ENCODE measurements at regions of chr11 and their contacts with region 1.

Region 1: DNA sequence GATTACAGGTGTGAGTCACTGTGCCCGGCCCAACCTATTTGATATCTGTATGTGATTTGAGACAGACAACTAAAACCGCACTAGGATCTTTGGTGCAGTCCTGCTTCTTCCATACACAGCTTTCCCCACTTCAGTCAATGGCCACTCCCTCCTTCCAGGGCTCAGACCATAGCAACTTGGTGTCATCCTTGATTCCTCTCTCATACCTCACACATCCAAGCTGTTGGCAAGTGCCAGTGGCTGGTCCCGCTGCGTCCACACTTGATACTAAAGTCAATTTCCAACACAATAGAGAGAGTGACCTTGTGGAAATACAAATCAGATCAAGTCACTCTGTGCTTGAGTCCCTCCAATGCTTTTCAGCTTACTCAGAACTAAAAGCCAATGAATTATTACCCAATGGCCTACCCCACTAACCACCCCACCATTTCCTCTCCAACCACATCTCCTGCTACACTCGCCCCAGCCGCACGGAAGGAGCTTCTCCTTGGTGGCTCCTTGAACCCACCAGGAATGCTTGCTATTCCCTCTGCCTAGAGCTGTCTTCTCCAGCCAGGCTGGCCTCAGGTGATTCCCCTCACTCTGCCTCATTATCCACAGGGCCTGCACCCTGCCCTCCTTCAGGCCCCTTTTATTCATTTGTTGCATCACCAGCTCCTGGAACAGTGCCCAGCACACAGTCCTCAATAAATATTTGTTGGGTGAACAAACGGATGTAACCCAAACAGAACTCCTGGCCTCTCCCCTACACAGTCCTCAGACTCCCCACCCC is 12.9 kb downstream of the ABTB2 start:
- DNase-seq: peak in 1 of 2 donors; percentile 26
- ATAC-seq: peak in 5 of 8 donors; percentile 3 to 25 (median 21)
- H3K4me3 ChIP-seq: no peak overlapping the region
- H3K27ac ChIP-seq: peak overlapping the region in 8 of 10 donors; percentile 49 to 90 (median 79)
- H3K4me1 ChIP-seq: peaks cover 39 to 89% (median 69%) of the 10 kb centered on the region in 9 donors
- H3K27me3 ChIP-seq: no peaks in the 10 kb centered on the region
- CTCF ChIP-seq: no peak

Region 2: DNA sequence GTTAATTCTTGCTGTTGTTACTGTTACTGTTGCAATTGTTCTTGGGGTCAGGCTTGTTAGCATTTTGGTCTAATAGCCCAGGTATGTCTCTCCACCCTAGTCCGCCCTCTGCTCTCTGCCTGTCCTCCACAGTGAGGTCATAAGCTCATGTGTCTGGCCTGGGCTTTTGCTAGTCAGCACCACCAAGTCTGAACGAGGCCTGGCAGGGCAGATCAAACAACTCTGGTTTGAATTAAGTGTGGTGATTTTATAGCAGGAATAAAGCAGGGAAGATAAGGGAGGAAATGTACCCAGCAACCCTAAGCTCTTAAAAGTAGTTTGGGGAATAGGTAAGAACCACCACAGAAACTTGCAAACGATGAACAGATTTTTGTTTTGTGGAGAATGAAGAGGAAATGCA is 85.9 kb before region 1 on chr11:
- intact Hi-C with region 1: loop called in 3 of 10 experiments (anchors 5 to 10 kb)
- DNase-seq: no peak
- ATAC-seq: no peak
- H3K4me3 ChIP-seq: no peak overlapping the region
- H3K27ac ChIP-seq: no peak overlapping the region
- H3K4me1 ChIP-seq: peaks cover 9 to 48% (median 25%) of the 10 kb centered on the region in 9 donors
- H3K27me3 ChIP-seq: no peaks in the 10 kb centered on the region
- CTCF ChIP-seq: no peak

Region 3: DNA sequence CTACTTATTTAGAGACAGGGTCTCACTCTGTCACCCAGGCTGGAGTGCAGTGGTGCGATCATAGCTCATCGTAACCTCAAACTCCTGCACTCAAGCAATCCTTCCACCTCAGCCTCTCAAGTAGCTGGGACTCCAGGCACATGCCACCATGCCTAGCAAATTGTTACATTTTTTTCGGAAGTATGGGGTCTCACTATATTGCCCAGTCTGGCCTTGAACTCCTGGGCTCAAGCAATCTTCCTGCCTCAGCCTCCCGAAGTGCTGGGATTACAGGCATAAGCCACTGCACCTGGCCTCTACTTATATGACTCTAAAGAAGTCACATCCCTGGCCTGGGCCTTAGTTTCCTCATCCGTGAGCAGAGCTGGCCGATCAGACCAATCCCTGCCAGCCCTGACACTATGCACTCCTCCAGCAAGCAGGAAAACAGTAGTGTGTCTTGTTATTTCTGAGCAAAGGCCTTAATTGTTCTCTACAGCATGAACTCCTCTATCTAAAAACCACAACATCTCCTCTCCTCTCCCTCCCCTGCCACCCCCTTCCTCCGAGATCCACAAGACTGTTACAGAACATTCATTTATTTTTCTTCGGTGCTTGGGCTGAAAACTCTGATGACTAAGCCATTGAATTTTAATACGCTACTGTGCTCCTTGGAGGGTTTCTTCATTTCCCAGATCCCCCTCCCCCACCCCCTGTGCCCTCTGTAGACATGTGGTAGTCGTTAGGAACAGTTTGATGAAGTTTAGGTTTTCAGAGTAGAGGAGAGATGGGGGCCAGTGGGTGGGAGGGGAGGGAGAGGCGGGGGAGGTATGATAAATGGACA is 78.7 kb before region 1 on chr11:
- intact Hi-C with region 1: loop called in 2 of 10 experiments (anchors 10 kb)
- DNase-seq: peak in 1 of 2 donors; percentile 49
- ATAC-seq: peak; percentile 38 to 62 (median 46)
- H3K4me3 ChIP-seq: no peak overlapping the region
- H3K27ac ChIP-seq: peak overlapping the region in 7 of 10 donors; percentile 5 to 62 (median 51)
- H3K4me1 ChIP-seq: peaks cover 9 to 53% (median 32%) of the 10 kb centered on the region in 9 donors
- H3K27me3 ChIP-seq: no peaks in the 10 kb centered on the region
- CTCF ChIP-seq: no peak

Region 4: DNA sequence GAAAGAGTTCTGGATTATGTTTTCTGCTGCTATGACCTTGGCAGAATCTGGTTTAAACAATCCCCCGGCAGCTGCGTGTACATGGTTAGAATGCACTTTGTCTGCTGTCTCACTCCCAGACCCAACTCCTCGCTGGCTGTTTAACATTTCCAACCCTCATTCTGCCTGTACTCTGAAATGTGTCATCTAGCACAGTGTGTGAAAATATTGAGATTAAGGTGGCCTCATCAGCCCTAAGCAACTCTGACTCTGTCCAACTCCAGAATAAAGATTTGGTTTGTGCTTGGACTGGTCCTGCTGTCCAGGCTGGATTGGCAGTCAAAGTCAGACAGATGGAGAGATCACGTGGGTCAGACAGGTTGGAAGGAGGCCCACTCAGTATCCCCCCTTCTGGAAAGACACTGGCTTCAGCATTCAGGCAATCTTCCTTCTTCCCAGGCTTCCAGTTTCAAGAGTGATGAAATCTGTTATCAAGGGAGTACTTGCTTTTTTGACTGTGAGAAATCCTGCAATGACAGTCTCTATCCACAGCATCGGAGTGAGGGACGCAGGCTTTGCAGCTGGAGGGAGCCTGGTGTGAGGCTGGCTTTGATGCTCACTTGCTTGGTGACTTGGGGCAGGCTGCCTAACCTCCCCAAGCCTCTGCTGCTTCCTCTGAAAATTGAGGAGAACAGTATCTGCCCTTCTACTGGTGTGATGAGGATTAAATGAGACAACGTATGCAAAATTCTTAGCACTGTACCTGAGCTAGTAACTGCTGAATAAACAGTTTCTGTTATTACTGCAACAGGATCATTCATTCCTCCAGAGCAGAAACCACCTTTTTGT is 16.9 kb before region 1 on chr11:
- intact Hi-C with region 1: loop called in 1 of 10 experiments (anchors 2 kb)
- DNase-seq: peak; percentile 39 to 70
- ATAC-seq: peak; percentile 76 to 89 (median 81)
- H3K4me3 ChIP-seq: no peak overlapping the region
- H3K27ac ChIP-seq: peak overlapping the region in 7 of 10 donors; percentile 7 to 70 (median 50)
- H3K4me1 ChIP-seq: peaks cover 8 to 80% (median 41%) of the 10 kb centered on the region in 9 donors
- H3K27me3 ChIP-seq: no peaks in the 10 kb centered on the region
- CTCF ChIP-seq: no peak